Activated CD4-positive, alpha-beta T cell treated with anti-CD3 and anti-CD28 coated beads for 36 hours (primary cell): ENCODE measurements at regions of chr2 and their contacts with region 1.

Region 1: DNA sequence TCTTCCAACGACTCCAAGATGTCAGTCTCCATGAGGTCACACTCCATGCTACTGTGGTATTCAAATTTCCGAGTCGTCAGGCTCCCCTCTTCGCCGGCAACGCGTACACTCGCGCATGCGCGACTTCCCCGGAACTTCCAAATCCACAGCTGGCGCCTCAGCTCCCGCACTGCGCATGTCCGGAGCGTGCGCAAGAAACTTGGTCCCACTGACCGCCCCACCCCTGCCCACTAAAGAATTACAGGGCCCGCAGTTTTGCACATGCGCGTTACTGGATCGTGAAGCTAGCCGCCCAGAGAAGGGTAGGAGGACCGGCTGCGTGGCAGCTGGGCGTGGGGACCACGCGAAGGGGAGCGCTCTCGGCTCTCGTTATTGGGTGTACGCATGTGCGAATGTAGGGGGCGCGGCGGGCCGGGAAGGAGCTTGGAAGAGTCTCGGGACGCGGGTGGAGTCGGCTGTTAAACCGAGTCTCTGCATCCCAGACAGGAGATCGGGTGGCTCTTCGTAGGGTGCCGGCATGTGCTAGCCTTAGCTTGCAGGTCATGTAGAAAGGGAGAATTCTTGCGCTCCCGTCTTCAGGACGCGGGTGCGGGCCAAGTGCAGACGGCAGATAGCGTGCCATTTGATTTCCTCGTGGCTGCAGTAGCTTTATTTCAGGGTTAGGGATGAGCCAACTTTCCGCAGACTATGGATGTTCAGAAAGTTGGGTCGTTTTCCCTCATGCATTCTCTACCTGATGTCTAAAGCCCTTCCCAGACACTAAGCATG is at the start of gene FAM98A:
- DNase-seq: peak; percentile 99
- ATAC-seq: peak; percentile 91
- H3K4me3 Mint-ChIP-seq: peak within 1 kb of the TSS; percentile 88
- H3K27ac Mint-ChIP-seq: peak within 1 kb of the TSS; percentile 93
- H3K4me1 Mint-ChIP-seq: peaks cover 24% of the 10 kb centered on the region
- H3K27me3 Mint-ChIP-seq: no peaks in the 10 kb centered on the region
- total RNA-seq, gene FAM98A: 42.9 to 61.5 TPM

Region 2: DNA sequence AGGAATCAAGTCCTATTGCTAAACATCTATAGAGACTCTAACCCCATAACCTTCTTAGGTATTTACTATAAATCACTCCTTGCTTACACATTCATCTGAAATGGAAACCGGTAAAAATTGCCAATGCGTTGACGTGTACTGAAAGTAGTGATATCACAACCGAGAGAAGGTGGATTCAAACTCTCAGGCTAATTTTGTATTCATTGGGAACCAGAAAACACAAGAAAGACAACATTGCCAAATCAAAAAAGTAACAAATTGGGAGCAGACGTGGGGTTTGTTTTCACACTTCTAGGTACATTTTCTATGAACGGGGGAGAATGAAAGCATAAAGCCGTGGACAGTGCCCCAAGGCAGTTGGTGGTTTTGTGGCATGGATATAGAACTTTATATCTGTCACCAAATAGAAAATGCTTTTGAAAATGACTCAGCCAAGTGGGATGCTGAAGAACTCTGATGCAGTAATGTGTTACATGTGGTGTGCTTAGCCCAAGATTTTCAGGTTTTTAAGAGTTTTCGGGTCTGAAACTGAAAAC is 278.1 kb before region 1 on chr2:
- CTCF ChIA-PET with region 1: no interaction called
- POLR2A ChIA-PET with region 1: no interaction called
- intact Hi-C with region 1: loop called in 1 of 2 experiments (anchors 5 kb)
- DNase-seq: peak; percentile 63
- ATAC-seq: peak; percentile 88
- H3K4me3 Mint-ChIP-seq: peak overlapping the region; percentile 26
- H3K27ac Mint-ChIP-seq: peak overlapping the region; percentile 84
- H3K4me1 Mint-ChIP-seq: peaks cover 26% of the 10 kb centered on the region
- H3K27me3 Mint-ChIP-seq: peaks cover 5% of the 10 kb centered on the region

Region 3: DNA sequence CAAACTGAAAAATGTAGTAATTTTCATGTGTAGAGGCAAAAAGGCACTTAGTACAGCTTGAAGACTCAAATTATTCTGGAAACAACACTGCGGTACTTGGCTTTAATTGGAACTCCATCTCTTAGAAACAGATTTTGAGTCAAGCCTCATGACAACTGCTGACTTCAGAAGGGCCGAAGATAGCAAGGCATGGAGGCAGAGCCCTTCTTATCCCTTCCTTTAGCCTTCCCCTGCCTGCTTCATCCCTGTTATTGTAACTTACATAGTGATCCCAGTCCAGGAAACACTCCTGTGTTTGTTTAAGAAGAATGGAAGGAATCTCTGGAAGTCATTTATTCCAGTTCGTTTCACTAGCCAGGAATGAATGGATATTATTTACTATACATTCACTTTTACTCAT is 110.6 kb after region 1 on chr2:
- CTCF ChIA-PET with region 1: no interaction called
- POLR2A ChIA-PET with region 1: no interaction called
- intact Hi-C with region 1: no loop called
- DNase-seq: no peak
- ATAC-seq: no peak
- H3K4me3 Mint-ChIP-seq: no peak overlapping the region
- H3K27ac Mint-ChIP-seq: no peak overlapping the region
- H3K4me1 Mint-ChIP-seq: no peaks in the 10 kb centered on the region
- H3K27me3 Mint-ChIP-seq: peaks cover 2% of the 10 kb centered on the region